Naive thymus-derived CD4-positive, alpha-beta T cell (primary cell): ENCODE measurements at regions of chr14 and their contacts with region 1.

Region 1: DNA sequence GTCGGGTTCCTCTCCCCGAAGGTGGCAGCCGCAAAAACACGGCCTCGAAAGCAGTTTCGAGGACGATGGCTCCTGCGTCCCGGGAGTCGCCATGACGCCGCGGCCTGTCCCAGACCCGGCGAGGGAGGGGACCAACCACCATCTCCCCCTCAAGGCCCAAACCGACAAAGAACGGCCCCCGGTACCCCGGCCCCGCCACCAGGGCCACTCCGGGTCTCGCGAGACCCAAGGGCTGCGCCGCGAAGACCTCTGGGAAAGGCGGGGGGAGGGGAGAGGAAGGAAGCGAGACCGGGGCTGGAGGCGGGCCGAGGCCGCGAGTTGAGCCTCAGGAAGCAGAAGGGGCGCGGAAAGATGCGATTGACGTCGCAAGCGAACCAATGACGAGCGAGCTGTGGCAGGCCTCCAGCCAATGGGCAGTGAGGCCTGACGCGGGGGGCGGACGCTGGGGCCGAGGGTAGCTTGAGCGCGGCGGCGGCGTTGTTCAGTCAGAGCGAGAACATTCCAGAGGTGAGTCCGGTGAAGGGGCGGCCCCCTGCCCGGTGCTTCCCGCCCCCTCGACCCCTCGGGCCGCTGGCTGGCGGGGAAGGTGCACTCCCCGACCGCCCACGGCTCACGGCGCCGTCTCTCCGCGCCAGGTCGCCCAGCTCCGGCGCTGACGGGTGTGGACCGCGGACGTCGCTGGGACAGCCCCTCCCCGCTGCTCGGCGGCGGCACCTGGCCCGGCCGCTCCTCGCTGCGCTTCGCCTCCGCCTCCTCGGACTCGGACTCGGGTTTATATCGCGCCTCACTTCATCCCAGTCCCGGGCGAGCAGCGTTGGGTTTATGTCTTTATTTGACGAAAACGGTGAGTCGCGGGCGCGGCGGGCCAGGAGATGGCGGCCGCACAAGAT is at the start of gene EIF5:
- DNase-seq: peak; percentile 92 to 99 (median 99)
- ATAC-seq: peak; percentile 91
- H3K4me3 ChIP-seq: peak within 1 kb of the TSS; percentile 81
- H3K4me3 Mint-ChIP-seq: peak within 1 kb of the TSS; percentile 92 to 97 (median 96)
- H3K27ac ChIP-seq: peak within 1 kb of the TSS; percentile 99
- H3K27ac Mint-ChIP-seq: peak within 1 kb of the TSS; percentile 94 to 99 (median 98)
- H3K4me1 ChIP-seq: peaks cover 22 to 29% of the 10 kb centered on the region in 2 donors
- H3K4me1 Mint-ChIP-seq: peaks cover 23 to 61% (median 50%) of the 10 kb centered on the region in 7 donors
- H3K27me3 ChIP-seq: no peaks in the 10 kb centered on the region
- H3K27me3 Mint-ChIP-seq: peaks cover 0 to 4% (median 0%) of the 10 kb centered on the region in 5 donors
- total RNA-seq, gene EIF5: 182 to 716 (median 322) TPM

Region 2: DNA sequence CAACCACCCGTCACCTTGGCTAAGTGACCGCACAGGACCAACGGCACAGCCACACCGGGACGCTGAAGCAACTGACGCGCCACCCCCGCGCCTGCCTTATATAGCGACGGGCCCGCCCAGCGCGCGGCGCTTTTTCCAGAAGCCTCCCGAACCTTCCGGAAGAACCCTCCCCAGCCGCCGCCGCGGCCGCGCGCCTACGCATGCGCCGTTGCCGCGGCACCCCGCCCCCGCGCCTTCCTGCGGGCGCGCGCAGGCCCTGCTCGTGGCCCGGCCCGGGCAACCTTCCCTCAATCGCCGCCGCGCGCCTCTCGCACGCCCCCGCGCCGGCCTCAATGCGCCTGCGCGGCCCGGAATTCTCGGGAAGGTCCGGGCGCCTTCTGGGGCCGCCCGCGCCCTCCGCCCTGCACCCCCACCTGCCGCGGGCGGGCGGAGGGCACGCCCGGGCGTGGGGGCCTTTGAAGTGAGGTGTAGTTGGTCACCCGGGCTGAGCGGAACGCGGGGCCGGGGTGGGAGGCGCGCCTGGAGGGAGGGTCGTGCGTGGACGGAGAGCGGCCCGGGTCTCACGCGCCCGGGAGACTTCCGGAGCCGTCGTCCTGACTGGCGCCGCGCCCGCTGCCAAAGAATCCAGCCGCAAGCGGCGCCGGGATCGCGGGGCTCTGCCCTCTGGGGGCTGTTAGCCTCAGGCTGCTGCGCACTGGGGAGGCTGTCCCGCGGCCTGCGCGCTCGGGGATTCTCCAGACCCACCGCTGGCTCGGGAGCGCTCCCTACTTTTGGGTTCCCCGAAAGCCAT is 1246.8 kb before region 1 on chr14 and contains the start of gene HSP90AA1:
- CTCF ChIA-PET with region 1: no interaction called
- POLR2A ChIA-PET with region 1: no interaction called
- intact Hi-C with region 1: loop called (anchors 2 to 5 kb)
- DNase-seq: peak; percentile 89 to 99 (median 94)
- ATAC-seq: peak; percentile 87
- H3K4me3 ChIP-seq: peak within 1 kb of the TSS; percentile 91
- H3K4me3 Mint-ChIP-seq: peak within 1 kb of the TSS; percentile 90 to 98 (median 96)
- H3K27ac ChIP-seq: peak within 1 kb of the TSS; percentile 98
- H3K27ac Mint-ChIP-seq: peak within 1 kb of the TSS; percentile 93 to 98 (median 96)
- H3K4me1 ChIP-seq: peaks cover 41 to 43% of the 10 kb centered on the region in 2 donors
- H3K4me1 Mint-ChIP-seq: peaks cover 44 to 70% (median 62%) of the 10 kb centered on the region in 7 donors
- H3K27me3 ChIP-seq: no peaks in the 10 kb centered on the region
- H3K27me3 Mint-ChIP-seq: no peaks in the 10 kb centered on the region
- total RNA-seq, gene HSP90AA1: 229 to 591 (median 361) TPM

Region 3: DNA sequence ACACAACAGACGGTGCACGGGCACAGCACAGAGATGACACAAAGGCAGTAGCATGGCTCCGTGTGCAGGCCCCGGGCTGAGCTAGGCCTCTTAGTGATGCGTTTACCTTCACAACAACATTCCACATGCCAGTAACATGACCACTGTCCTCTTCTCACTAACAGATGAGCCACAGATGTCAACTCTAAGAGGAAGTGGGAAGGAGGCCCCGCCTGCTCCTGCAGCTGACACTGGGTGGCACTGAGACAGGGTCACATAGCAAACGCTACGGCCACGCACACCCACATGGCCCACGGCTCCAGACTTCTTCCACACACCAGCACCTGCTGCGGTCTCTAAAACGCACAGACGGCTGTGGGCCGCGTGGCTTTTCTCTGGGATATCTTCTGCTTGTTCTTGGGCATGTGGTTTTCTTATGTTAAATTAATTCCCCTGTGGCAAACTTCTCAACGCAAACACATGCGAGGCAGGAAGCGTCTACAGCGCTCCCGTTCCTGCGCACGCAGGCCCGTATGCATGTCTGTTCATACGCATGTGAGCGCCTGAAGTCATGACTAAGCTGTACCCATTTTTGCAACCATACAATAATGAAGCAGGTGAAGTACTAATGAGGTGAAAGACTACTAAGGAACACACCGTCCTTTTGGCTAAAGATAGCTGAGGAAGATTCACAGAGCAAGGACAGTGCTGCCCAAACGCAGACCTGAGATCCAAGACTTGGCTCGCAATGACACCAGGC is 384.8 kb before region 1 on chr14:
- CTCF ChIA-PET with region 1: no interaction called
- POLR2A ChIA-PET with region 1: no interaction called
- intact Hi-C with region 1: loop called in 1 of 2 experiments (anchors 10 kb)
- DNase-seq: peak in 7 of 9 donors; percentile 48 to 82 (median 77)
- ATAC-seq: peak; percentile 81
- H3K4me3 ChIP-seq: no peak overlapping the region
- H3K4me3 Mint-ChIP-seq: peak overlapping the region; percentile 30 to 77 (median 62)
- H3K27ac ChIP-seq: peak overlapping the region; percentile 46
- H3K27ac Mint-ChIP-seq: peak overlapping the region; percentile 59 to 98 (median 91)
- H3K4me1 ChIP-seq: peaks cover 0 to 17% of the 10 kb centered on the region in 2 donors
- H3K4me1 Mint-ChIP-seq: peaks cover 14 to 31% (median 28%) of the 10 kb centered on the region in 7 donors
- H3K27me3 ChIP-seq: no peaks in the 10 kb centered on the region
- H3K27me3 Mint-ChIP-seq: no peaks in the 10 kb centered on the region

Region 4: DNA sequence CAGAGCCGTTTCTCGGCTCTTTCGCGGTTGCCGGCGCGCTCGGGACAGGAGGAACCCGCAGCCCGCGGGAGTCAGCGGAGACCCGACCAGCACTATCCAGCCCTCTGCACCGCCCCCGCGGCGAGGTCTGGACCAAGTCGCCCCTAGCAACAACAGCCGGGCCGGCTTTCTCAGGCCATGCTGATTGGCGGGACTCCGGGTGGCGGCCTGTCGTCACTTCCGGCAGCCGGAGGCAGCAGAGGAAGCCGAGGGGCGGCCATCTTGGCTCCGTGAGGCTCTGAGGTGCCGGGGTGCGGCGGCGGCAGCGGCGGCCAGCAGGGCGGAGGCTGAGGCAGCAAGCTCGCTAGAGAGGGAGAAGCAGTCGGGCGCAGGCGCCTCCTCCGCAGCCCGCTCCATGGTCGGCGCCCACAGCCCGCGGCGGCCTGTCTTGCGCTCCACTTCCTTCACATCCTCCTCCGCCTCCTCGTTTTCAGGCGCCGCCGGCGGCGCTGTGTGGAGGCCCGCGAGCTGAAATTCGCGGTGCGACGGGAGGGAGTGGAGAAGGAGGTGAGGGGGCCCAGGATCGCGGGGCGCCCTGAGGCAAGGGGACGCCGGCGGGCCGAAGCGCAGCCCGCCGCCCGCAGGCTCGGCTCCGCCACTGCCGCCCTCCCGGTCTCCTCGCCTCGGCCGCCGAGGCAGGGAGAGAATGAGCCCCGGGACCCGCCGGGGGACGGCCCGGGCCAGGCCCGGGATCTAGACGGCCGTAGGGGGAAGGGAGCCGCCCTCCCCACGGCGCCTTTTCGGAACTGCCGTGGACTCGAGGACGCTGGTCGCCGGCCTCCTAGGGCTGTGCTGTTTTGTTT is 51.4 kb after region 1 on chr14 and contains the start of gene MARK3:
- CTCF ChIA-PET with region 1: interaction called, 6 read pairs
- POLR2A ChIA-PET with region 1: interaction called, 51 read pairs
- intact Hi-C with region 1: loop called (anchors 1 kb)
- DNase-seq: peak; percentile 92 to 96 (median 95)
- ATAC-seq: peak; percentile 93
- H3K4me3 ChIP-seq: peak within 1 kb of the TSS; percentile 98
- H3K4me3 Mint-ChIP-seq: peak within 1 kb of the TSS; percentile 94 to 99 (median 96)
- H3K27ac ChIP-seq: peak within 1 kb of the TSS; percentile 90
- H3K27ac Mint-ChIP-seq: peak within 1 kb of the TSS; percentile 91 to 98 (median 95)
- H3K4me1 ChIP-seq: peaks cover 26 to 32% of the 10 kb centered on the region in 2 donors
- H3K4me1 Mint-ChIP-seq: peaks cover 12 to 51% (median 37%) of the 10 kb centered on the region in 7 donors
- H3K27me3 ChIP-seq: no peaks in the 10 kb centered on the region
- H3K27me3 Mint-ChIP-seq: peaks cover 0 to 13% (median 9%) of the 10 kb centered on the region in 5 donors
- total RNA-seq, gene MARK3: 86.9 to 133 (median 116) TPM

Region 5: DNA sequence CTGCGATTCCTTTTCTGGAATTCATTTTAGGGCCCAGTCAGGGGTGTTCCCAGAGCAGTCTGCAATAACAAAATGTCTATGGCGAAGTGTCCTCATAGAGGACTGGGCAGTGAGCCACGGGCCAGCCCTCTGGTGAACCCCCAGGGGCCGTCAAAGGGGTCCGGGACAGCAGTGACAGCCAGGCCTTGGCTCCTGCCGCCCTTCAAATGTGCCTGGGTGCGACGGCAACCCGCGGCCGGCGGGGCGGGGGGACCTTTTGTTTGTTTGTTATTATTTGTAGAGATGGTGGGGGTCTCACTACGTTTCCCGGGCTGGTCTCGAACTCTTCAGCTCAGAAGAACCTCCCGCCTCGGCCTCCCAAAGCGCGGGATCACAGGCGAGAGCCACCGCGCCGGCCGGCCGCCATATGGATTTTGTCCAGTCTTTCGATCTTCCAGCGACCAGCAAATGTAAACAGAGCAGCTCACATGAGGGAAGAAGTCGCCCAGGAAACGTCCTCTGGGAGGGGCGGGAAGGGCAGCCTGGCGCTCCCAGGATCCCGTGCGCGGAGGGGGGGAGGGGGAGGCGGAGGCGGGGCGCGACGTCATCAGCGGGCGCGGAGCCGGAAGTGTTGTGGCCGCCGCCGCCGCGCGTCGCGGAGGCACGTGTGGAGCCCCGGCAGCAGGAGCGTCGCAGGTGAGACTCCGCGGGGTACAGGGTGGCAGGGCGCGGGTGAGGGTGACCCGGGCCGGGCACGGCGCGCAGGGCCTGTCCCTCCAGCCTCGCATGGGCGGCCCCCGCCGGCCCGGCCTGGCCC is 194.8 kb after region 1 on chr14 and contains the start of gene TRMT61A:
- CTCF ChIA-PET with region 1: no interaction called
- POLR2A ChIA-PET with region 1: interaction called, 15 read pairs
- intact Hi-C with region 1: loop called in 1 of 2 experiments (anchors 1 kb)
- DNase-seq: peak; percentile 58 to 80 (median 74)
- ATAC-seq: peak; percentile 85
- H3K4me3 ChIP-seq: peak within 1 kb of the TSS; percentile 96
- H3K4me3 Mint-ChIP-seq: peak within 1 kb of the TSS; percentile 89 to 97 (median 95)
- H3K27ac ChIP-seq: peak within 1 kb of the TSS; percentile 81
- H3K27ac Mint-ChIP-seq: peak within 1 kb of the TSS; percentile 91 to 98 (median 96)
- H3K4me1 ChIP-seq: peaks cover 19 to 21% of the 10 kb centered on the region in 2 donors
- H3K4me1 Mint-ChIP-seq: peaks cover 30 to 39% (median 35%) of the 10 kb centered on the region in 7 donors
- H3K27me3 ChIP-seq: no peaks in the 10 kb centered on the region
- H3K27me3 Mint-ChIP-seq: peaks cover 0 to 21% (median 1%) of the 10 kb centered on the region in 5 donors
- total RNA-seq, gene TRMT61A: 9.8 to 15.1 (median 14.1) TPM

Region 6: GRCh38 chr14:103920981-103921854 is 587.2 kb after region 1 on chr14:
- CTCF ChIA-PET with region 1: no interaction called
- POLR2A ChIA-PET with region 1: no interaction called
- intact Hi-C with region 1: loop called in 1 of 2 experiments (anchors 2 kb)
- DNase-seq: peak; percentile 90 to 99 (median 96)
- ATAC-seq: peak; percentile 100
- H3K4me3 ChIP-seq: peak overlapping the region; percentile 100
- H3K4me3 Mint-ChIP-seq: peak overlapping the region; percentile 85 to 96 (median 90)
- H3K27ac ChIP-seq: peak overlapping the region; percentile 83
- H3K27ac Mint-ChIP-seq: peak overlapping the region; percentile 61 to 90 (median 83)
- H3K4me1 ChIP-seq: peaks cover 9 to 16% of the 10 kb centered on the region in 2 donors
- H3K4me1 Mint-ChIP-seq: peaks cover 0 to 37% (median 16%) of the 10 kb centered on the region in 7 donors
- H3K27me3 ChIP-seq: no peaks in the 10 kb centered on the region
- H3K27me3 Mint-ChIP-seq: peaks cover 4 to 14% (median 9%) of the 10 kb centered on the region in 5 donors